Activated T-helper 1 cell treated with anti-CD3 and anti-CD28 coated beads, Interleukin-12 subunit alpha, Interleukin-12 subunit beta, Interleukin-2, Interleukin-4 antibody, amounts not matched to agents 30 ng/mL and 10 ng/mL and 1 ng/mL, durations not matched to agents 14 hours and 24 hours and 36 hours (primary cell): ENCODE measurements at regions of chr3 and their contacts with region 1.

Region 1: DNA sequence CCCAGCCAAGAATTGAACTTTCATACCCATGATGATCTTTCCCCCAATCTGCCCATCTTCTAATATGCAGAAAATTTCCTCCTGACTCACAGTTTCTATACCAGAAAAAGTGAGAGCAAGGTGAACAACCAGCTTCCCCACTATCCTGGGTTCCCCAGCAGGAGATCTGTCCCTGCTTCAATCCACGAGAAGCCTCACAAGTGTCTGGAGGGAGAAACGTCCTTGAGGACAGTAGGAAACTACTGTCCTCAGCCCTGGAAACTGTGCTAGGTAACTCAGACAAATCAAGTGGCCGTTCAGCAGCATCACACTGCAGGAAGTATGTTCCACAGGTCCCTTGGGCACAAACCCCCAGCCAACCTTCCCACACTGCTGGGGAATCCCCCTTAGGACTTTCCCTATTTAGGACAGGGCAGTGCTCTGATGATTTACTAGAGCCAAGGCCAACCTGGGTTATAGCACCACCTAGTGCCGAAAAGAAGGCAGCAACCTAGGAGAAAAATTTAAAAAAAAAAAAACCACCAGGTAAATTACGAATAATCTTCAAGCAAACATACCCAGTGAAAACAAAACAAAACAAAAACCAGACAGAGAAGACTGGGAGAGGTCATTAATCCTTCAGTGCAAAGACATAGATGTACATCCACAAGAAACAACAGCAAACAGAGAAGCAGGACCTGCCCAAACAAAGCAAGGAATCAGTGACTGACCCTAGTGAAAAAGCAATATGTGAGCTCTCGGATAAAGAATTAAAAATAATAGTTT is 36.0 kb downstream of the MORC1 start:
- DNase-seq: no peak
- H3K4me3 Mint-ChIP-seq: no peak overlapping the region
- H3K27ac Mint-ChIP-seq: no peak overlapping the region
- H3K4me1 Mint-ChIP-seq: peaks cover 5% of the 10 kb centered on the region
- H3K27me3 Mint-ChIP-seq: peaks cover 30% of the 10 kb centered on the region

Region 2: DNA sequence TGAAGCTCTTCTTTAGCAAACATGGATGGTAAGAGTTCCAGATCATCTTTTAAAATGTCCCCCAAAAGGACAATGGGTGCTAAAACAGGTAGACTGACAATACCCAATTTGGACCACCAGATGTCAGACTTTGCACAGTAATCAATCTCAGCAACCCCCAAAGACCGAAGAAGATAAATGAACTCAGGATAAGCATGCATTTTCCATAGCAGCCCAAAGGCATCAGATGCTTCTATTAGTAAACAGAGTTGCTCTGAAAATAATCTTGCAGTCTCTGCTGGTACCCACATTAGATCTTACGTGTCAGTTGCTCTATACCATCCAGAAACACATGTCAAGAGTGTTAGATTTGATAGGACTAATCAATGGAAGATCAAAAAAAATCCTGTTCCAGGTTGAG is 592.2 kb before region 1 on chr3:
- intact Hi-C with region 1: loop called (anchors 1 kb)
- DNase-seq: no peak
- H3K4me3 Mint-ChIP-seq: no peak overlapping the region
- H3K27ac Mint-ChIP-seq: no peak overlapping the region
- H3K4me1 Mint-ChIP-seq: peaks cover 4% of the 10 kb centered on the region
- H3K27me3 Mint-ChIP-seq: peaks cover 5% of the 10 kb centered on the region

Region 3: DNA sequence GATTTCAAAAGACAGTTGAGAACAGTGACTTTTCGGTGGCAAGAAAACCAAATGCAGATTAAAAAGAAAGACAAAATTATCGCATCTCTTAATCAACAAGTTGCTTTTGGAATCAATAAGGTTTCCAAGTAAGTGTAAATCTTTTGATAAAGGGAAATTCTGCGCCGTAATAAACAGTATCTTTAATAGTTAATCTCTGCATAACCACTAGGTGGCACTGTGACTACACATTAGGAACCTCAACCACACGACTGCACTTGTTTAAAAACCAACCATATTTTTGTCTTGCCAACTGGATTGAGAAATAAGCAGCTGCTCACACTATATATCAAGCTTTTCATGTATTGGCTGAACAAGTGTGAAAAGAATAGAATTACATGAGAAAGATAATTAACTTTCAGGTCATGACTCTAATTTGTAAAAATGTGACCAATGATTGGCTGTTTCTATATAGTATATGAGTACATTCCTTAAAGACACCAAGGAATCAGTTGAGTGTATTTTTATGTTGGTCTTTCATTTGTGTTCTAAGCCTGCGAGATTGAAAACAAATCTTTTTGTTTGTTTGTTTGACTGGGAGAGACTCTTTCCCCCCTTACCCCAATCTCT is 419.7 kb before region 1 on chr3:
- intact Hi-C with region 1: loop called (anchors 1 kb)
- DNase-seq: peak; percentile 17
- H3K4me3 Mint-ChIP-seq: no peak overlapping the region
- H3K27ac Mint-ChIP-seq: no peak overlapping the region
- H3K4me1 Mint-ChIP-seq: peaks cover 17% of the 10 kb centered on the region
- H3K27me3 Mint-ChIP-seq: no peaks in the 10 kb centered on the region

Region 4: DNA sequence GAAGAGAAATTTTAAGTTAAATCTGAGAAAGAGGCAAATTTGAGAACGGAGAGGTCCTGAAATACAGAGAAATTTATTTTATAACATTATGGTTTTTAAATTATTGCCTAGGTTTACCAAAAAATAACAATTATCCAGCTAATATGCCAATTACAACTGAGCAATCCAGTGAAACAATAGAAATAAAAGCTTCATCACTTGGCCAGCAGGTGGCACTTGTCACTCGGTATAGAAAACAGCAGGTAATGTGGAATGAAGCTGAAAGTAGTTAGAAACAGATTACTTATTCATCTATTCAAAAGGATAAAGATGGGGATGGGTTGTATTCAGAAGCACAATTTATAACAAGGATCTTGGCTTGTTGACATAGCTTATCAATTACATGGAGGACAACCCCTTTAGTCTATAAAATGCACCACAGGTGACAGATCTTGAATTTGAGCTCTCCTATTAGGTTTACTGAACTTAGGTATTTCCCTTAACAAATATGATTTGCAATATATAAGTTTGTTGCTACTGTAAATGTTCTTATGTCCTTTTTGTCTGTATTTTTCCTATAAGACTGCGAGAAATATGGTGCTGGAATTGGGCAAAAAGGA is 58.2 kb before region 1 on chr3:
- intact Hi-C with region 1: loop called (anchors 1 kb)
- DNase-seq: no peak
- H3K4me3 Mint-ChIP-seq: no peak overlapping the region
- H3K27ac Mint-ChIP-seq: no peak overlapping the region
- H3K4me1 Mint-ChIP-seq: no peaks in the 10 kb centered on the region
- H3K27me3 Mint-ChIP-seq: peaks cover 3% of the 10 kb centered on the region

Region 5: GRCh38 chr3:109050591-109051167 is 31.2 kb before region 1 on chr3:
- intact Hi-C with region 1: loop called (anchors 1 kb)
- DNase-seq: no peak
- H3K4me3 Mint-ChIP-seq: no peak overlapping the region
- H3K27ac Mint-ChIP-seq: no peak overlapping the region
- H3K4me1 Mint-ChIP-seq: no peaks in the 10 kb centered on the region
- H3K27me3 Mint-ChIP-seq: peaks cover 7% of the 10 kb centered on the region

Region 6: DNA sequence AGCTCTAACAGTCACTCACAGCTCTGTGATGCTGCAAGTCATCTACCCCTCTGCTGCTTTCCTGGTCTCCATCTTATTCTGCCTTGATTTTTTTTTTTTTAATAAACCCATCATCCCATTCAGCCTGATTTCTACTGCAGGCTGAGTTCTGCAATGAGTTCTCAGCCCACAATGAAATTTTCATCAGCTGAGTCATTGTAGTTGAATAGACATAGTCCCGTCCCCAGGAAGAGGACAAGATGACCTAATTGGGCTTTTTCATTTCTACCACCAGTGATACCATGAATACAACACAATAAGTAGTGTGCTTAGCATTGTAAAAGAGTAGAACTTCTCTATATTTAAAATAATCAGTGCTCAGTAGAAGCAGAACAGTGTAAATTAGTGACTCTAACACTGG is 113.9 kb after region 1 on chr3:
- intact Hi-C with region 1: no loop called
- DNase-seq: no peak
- H3K4me3 Mint-ChIP-seq: no peak overlapping the region
- H3K27ac Mint-ChIP-seq: no peak overlapping the region
- H3K4me1 Mint-ChIP-seq: no peaks in the 10 kb centered on the region
- H3K27me3 Mint-ChIP-seq: no peaks in the 10 kb centered on the region